A549 (cell line): ENCODE measurements at regions of chr20 and their contacts with region 1.

Region 1: DNA sequence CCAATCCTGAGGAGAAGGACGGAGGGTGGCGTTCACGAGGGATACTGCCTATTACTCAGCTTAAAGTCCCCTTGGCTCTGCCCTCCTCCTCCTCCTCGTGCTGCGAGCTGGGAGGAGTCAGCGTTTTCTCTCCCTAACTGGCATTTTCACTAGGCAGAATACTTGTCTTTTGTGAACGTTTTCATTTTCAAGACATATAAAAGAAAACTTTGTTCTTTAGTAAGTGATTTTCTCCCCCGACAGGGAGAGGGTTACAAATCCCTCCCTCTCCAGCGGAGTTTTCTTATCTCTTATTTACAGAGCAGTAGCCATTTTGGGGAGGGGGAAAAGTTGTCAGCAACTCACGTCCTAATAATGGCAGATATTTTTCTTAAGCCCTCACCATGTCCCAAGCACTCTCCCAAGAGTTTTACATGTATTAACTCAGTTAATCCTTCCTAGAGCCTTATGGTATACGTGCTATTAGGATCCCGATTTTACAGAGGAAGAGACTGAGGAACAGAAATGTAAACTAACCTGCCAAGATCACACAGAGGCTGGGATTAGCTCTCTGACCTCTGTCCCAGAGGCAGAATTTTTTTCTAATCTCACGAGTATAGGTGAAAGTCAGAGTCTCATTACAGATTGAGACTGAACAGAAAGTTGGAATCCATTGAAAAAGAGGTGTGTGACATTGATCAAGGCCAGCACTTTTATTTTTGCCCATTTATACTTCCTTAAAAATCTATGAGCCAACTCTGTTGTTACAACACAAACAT is 30.0 kb upstream of the ZNF217 start:
- DNase-seq: peak; percentile 71 to 88
- ATAC-seq: peak; percentile 83
- H3K4me3 ChIP-seq: peak overlapping the region; percentile 37
- H3K27ac ChIP-seq: peak overlapping the region; percentile 93 to 98
- H3K4me1 ChIP-seq: peaks cover 38% of the 10 kb centered on the region
- CTCF ChIP-seq: 0 out of 3 replicates have a peak, but pooled peaks have one; percentile 24
- EP300 ChIP-seq: no peak
- POLR2A ChIP-seq: no peak; the same call in 1 of the 2 replicates
- RAD21 ChIP-seq: peak; percentile 38 to 49; a peak in 4 of 5 replicates

Region 2: DNA sequence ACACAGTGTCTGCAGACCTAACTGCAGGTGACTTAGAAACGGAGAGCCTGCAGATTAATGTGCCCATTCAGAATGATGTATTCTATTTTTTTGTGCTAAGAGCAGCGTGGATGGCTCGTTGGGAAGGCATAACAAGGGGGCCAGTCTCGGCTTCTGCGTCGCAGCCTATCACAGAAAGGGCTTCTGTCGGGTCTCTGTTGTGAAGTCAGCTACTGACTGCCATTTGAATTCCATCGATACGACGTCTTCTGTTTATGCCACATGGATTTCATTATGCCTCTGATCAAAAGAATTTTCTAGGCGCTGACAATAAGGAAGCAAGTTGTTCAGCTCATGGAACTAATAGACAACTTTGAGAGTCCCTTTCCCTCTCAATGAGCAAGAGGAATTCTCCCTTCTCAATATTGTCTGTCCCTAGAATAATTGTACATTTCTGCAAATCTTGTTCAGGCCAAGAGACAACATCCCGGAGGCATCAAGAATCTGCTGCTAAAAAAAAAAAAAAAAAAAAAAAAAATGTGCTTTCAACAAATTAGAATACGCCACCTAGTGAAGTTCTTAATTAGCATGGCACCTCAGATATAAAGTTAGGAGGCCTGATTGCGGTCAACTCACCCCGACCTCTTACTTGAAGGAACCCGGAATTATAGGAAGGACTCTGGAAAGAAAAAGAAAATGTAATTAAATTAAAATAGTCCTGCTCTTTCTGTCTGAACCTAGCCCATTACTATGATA is 427.6 kb before region 1 on chr20:
- CTCF ChIA-PET with region 1: no interaction called
- POLR2A ChIA-PET with region 1: no interaction called
- DNase-seq: no peak
- ATAC-seq: no peak
- H3K4me3 ChIP-seq: no peak overlapping the region
- H3K27ac ChIP-seq: no peak overlapping the region
- H3K4me1 ChIP-seq: no peaks in the 10 kb centered on the region
- CTCF ChIP-seq: no peak
- EP300 ChIP-seq: no peak
- POLR2A ChIP-seq: no peak
- RAD21 ChIP-seq: no peak

Region 3: DNA sequence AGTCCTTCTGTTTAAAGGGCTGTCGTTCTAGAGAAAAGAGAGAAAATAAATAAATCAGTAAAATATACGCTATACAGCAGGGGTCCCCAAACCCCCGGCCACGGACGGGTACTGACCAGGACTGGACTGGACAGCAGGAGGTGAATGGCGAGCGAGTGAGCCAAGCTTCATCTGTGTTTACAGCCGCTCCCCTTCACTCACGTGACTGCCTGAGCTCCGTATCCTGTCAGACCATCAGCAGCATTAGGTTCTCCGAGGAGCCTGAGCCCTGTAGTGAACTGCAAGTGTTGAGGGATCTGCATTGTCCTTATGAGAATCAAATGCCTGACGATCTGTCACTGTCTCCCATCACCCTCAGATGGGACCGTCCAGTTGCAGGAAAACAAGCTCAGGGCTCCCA is 106.5 kb before region 1 on chr20:
- CTCF ChIA-PET with region 1: no interaction called
- POLR2A ChIA-PET with region 1: no interaction called
- DNase-seq: no peak
- ATAC-seq: peak in 1 of 2 experiments; percentile 56; a peak in 3 of 6 replicates
- H3K4me3 ChIP-seq: no peak overlapping the region
- H3K27ac ChIP-seq: no peak overlapping the region
- H3K4me1 ChIP-seq: peaks cover 5% of the 10 kb centered on the region; the same call in 1 of the 3 replicates
- CTCF ChIP-seq: no peak
- EP300 ChIP-seq: no peak
- POLR2A ChIP-seq: no peak
- RAD21 ChIP-seq: no peak

Region 4: GRCh38 chr20:53611449-53611894 is 12.2 kb before region 1 on chr20:
- CTCF ChIA-PET with region 1: interaction called, 5 read pairs
- POLR2A ChIA-PET with region 1: interaction called, 46 read pairs
- DNase-seq: peak; percentile 65 to 90
- ATAC-seq: peak; percentile 66 to 74
- H3K4me3 ChIP-seq: 0 out of 3 replicates have a peak overlapping the region, but pooled peaks have one; percentile 0
- H3K27ac ChIP-seq: peak overlapping the region; percentile 74 to 91
- H3K4me1 ChIP-seq: peaks cover 57% of the 10 kb centered on the region
- CTCF ChIP-seq: no peak
- EP300 ChIP-seq: peak in 1 of 2 experiments; percentile 37; a peak in 1 of 5 replicates
- POLR2A ChIP-seq: no peak
- RAD21 ChIP-seq: 0 out of 5 replicates have a peak, but pooled peaks of 1 of the 2 experiments have one; percentile 26

Region 5: GRCh38 chr20:53660078-53660909 is 36.7 kb after region 1 on chr20:
- CTCF ChIA-PET with region 1: interaction called, 5 read pairs
- POLR2A ChIA-PET with region 1: interaction called, 11 read pairs
- DNase-seq: peak in 1 of 2 experiments; percentile 36
- ATAC-seq: peak; percentile 48 to 50; a peak in 3 of 6 replicates
- H3K4me3 ChIP-seq: peak overlapping the region; percentile 48
- H3K27ac ChIP-seq: peak overlapping the region; percentile 83 to 90
- H3K4me1 ChIP-seq: peaks cover 51% of the 10 kb centered on the region
- CTCF ChIP-seq: no peak
- EP300 ChIP-seq: no peak
- POLR2A ChIP-seq: 0 out of 2 replicates have a peak, but pooled peaks have one; percentile 20
- RAD21 ChIP-seq: no peak; a peak in 1 of 5 replicates

Region 6: DNA sequence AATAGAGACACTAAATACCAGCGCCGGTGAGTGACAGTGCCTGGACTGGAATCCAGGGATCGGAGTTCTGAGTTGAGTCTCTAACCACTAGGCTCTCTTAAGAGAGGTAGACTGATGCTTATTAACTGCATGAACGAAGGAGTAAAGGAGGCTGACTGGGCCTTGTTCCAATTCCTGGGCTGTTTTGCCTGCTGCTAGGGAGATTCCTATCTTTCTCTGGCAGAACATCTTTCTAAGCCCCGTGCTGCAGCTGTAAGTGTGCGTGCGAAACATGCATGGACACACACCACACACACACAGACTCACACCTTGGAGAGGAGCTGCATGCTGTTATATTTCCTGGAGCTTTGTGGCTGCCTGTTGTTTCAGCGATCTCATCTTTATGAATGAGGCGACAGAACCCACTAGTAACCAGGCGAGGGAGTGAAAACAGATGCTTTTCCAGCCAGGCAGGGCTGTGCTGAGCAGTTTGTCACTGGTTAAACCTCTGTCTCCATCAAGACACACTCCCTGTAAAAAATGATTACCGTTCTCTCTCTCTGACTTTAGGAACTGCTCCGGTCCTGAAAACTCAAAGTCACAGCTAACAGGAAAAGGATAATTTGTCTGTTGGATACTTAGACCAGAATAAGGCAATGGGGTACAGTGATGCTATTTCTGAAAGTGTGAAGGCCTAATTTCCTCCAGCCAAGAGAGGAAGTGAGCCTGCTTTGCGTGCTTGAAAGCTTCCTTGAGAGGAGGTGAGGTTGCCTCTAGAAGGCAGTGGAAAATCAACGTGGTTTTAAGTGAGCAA is 127.4 kb after region 1 on chr20:
- CTCF ChIA-PET with region 1: interaction called, 5 read pairs
- POLR2A ChIA-PET with region 1: interaction called, 34 read pairs
- DNase-seq: no peak
- ATAC-seq: peak in 1 of 2 experiments; percentile 12; a peak in 1 of 6 replicates
- H3K4me3 ChIP-seq: no peak overlapping the region
- H3K27ac ChIP-seq: peak overlapping the region; percentile 86
- H3K4me1 ChIP-seq: peaks cover 53% of the 10 kb centered on the region
- CTCF ChIP-seq: no peak
- EP300 ChIP-seq: no peak
- POLR2A ChIP-seq: no peak
- RAD21 ChIP-seq: no peak

Region 7: GRCh38 chr20:53939572-53940359 is 316.1 kb after region 1 on chr20:
- CTCF ChIA-PET with region 1: interaction called, 20 read pairs
- POLR2A ChIA-PET with region 1: interaction called, 6 read pairs
- DNase-seq: peak; percentile 79 to 94
- ATAC-seq: peak; percentile 91 to 94
- H3K4me3 ChIP-seq: no peak overlapping the region
- H3K27ac ChIP-seq: peak overlapping the region; percentile 62 to 78
- H3K4me1 ChIP-seq: peaks cover 60% of the 10 kb centered on the region
- CTCF ChIP-seq: peak; percentile 92
- EP300 ChIP-seq: no peak; a peak in 1 of 5 replicates
- POLR2A ChIP-seq: no peak
- RAD21 ChIP-seq: peak; percentile 98 to 99